Activated CD4-positive, alpha-beta T cell treated with anti-CD3 and anti-CD28 coated beads, Interleukin-2, amount 10 ng/mL, durations not matched to agents 24 days and 14 days (primary cell): ENCODE measurements at regions of chr1 and their contacts with region 1.

Region 1: GRCh38 chr1:7921796-7922195 is 18.8 kb downstream of the TNFRSF9 start:
- DNase-seq: no peak
- H3K4me3 Mint-ChIP-seq: no peak overlapping the region
- H3K27ac Mint-ChIP-seq: peak overlapping the region; percentile 20
- H3K4me1 Mint-ChIP-seq: peaks cover 21% of the 10 kb centered on the region
- H3K27me3 Mint-ChIP-seq: no peaks in the 10 kb centered on the region

Region 2: GRCh38 chr1:7961216-7962015 is 39.6 kb after region 1 on chr1 and contains the start of gene PARK7:
- intact Hi-C with region 1: loop called (anchors 2 kb)
- DNase-seq: peak; percentile 100
- H3K4me3 Mint-ChIP-seq: peak within 1 kb of the TSS; percentile 99
- H3K27ac Mint-ChIP-seq: peak within 1 kb of the TSS; percentile 100
- H3K4me1 Mint-ChIP-seq: peaks cover 45% of the 10 kb centered on the region
- H3K27me3 Mint-ChIP-seq: no peaks in the 10 kb centered on the region
- total RNA-seq, gene PARK7: 409 and 426 TPM in 2 replicates

Region 3: DNA sequence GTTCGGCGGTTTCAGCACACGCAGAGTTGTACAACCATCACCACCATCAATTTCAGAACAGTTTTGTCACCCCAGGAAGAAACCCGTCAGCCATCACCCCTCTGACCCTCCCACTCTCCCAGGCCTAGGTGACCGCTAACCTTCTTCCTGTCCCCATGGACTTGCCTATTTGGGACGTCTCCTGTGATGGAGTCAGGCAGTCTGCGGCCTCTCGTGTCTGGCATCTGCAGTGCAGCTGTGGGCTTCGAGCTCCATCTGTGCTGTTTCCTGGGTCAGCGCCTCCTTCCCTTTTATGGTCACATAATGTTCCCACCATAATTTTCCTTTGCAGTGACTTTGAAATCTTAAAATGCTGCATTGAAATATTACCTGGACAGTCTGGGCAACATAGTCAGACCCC is 420.5 kb after region 1 on chr1:
- intact Hi-C with region 1: no loop called
- DNase-seq: no peak
- H3K4me3 Mint-ChIP-seq: no peak overlapping the region
- H3K27ac Mint-ChIP-seq: no peak overlapping the region
- H3K4me1 Mint-ChIP-seq: no peaks in the 10 kb centered on the region
- H3K27me3 Mint-ChIP-seq: no peaks in the 10 kb centered on the region